Tibial artery (tissue), 4 donors: ENCODE measurements at regions of chr5 and their contacts with region 1.

Region 1: DNA sequence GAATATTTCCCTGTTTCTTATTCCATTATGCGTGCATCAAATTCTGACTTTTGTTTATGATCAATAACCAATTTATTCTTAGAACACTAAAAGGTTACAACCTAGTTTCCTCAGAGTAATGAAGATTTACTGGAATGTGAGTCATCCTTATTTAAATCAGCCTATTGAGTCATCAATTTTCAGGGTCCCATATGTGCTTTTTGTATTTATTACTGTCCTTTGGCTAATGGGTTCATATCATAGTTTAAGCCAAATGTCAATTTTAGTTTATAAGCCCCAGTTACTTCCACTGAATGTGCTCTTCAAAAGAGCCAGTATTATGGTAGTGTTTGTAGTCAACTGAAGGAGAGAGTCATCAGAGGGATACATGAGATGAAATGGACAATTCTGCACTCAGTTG is 359.2 kb downstream of the PRR16 start:
- DNase-seq: no peak
- H3K4me3 ChIP-seq: no peak overlapping the region
- H3K27ac ChIP-seq: no peak overlapping the region
- H3K4me1 ChIP-seq: no peaks in the 10 kb centered on the region
- H3K27me3 ChIP-seq: no peaks in the 10 kb centered on the region
- CTCF ChIP-seq: no peak

Region 2: GRCh38 chr5:120564013-120564412 is 259.3 kb before region 1 on chr5:
- intact Hi-C with region 1: no loop called
- DNase-seq: no peak
- H3K4me3 ChIP-seq: no peak overlapping the region
- H3K27ac ChIP-seq: no peak overlapping the region
- H3K4me1 ChIP-seq: no peaks in the 10 kb centered on the region
- H3K27me3 ChIP-seq: no peaks in the 10 kb centered on the region
- CTCF ChIP-seq: no peak

Region 3: DNA sequence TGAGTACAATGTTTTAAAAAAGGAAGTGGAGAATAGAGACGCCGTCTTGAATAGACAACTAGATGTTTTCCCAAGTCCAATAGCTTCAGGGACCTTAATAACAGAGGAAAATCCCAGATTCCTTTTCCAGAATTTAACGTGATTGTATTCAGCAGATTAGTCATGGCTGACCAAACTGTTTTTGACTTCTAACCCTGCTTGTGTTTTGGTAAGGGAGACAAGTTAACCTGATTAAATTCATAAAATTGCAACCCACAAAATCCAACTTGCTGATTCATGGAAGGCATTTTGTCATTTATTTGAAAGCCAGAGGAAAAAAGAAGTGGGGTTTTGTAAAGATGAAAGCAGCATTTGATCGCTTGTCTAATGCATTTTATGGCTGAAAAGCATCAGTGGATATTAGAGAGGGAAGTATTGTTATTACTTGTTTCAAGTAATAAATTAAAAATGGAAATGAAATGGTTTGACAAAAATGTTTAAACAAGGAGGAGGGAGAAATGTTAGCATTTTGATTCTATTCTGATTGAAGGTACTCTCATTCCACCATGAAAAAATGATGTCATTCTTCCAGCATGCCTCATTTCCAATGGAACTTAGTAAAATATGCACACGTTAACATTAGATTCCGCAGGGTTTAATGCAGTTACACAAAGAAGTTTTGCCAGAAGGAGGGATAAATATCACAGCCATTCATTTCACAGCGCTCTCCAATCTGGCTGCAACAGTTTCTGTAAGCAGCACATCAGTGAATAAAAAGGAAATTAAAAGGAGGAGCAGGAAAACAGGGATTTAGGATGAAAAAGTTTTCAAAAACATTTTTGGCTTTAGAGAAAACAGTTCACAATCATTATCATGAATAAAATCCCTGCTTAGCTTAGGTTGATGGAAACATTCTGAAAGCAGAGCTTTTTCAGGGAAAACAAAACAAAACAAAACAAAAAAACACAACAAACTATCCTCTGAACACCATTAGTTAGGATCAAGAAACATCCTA is 44.5 kb before region 1 on chr5:
- intact Hi-C with region 1: loop called (anchors 10 kb)
- DNase-seq: no peak
- H3K4me3 ChIP-seq: peak overlapping the region in 1 of 2 donors; percentile 15
- H3K27ac ChIP-seq: no peak overlapping the region
- H3K4me1 ChIP-seq: peaks cover 0 to 16% (median 3%) of the 10 kb centered on the region in 4 donors
- H3K27me3 ChIP-seq: no peaks in the 10 kb centered on the region
- CTCF ChIP-seq: no peak